Activated naive CD4-positive, alpha-beta T cell treated with anti-CD3 and anti-CD28 coated beads for 36 hours (primary cell): ENCODE measurements at regions of chrX and their contacts with region 1.

Region 1: GRCh38 chrX:20397587-20397986 is 130.9 kb upstream of the RPS6KA3 start:
- DNase-seq: no peak
- H3K4me3 Mint-ChIP-seq: no peak overlapping the region
- H3K27ac Mint-ChIP-seq: no peak overlapping the region
- H3K4me1 Mint-ChIP-seq: peaks cover 15% of the 10 kb centered on the region
- H3K27me3 Mint-ChIP-seq: no peaks in the 10 kb centered on the region

Region 2: GRCh38 chrX:20224814-20225487 is 172.6 kb before region 1 on chrX:
- CTCF ChIA-PET with region 1: no interaction called
- intact Hi-C with region 1: loop called (anchors 1 kb)
- DNase-seq: no peak
- H3K4me3 Mint-ChIP-seq: no peak overlapping the region
- H3K27ac Mint-ChIP-seq: no peak overlapping the region
- H3K4me1 Mint-ChIP-seq: peaks cover 37% of the 10 kb centered on the region
- H3K27me3 Mint-ChIP-seq: no peaks in the 10 kb centered on the region

Region 3: GRCh38 chrX:20352935-20353336 is 44.7 kb before region 1 on chrX:
- CTCF ChIA-PET with region 1: no interaction called
- intact Hi-C with region 1: loop called (anchors 2 kb)
- DNase-seq: no peak
- H3K4me3 Mint-ChIP-seq: no peak overlapping the region
- H3K27ac Mint-ChIP-seq: no peak overlapping the region
- H3K4me1 Mint-ChIP-seq: peaks cover 24% of the 10 kb centered on the region
- H3K27me3 Mint-ChIP-seq: no peaks in the 10 kb centered on the region